Activated CD4-positive, alpha-beta T cell treated with anti-CD3 and anti-CD28 coated beads, Interleukin-2, amount 10 ng/mL, durations not matched to agents 24 days and 14 days (primary cell): ENCODE measurements at regions of chr13 and their contacts with region 1.

Region 1: DNA sequence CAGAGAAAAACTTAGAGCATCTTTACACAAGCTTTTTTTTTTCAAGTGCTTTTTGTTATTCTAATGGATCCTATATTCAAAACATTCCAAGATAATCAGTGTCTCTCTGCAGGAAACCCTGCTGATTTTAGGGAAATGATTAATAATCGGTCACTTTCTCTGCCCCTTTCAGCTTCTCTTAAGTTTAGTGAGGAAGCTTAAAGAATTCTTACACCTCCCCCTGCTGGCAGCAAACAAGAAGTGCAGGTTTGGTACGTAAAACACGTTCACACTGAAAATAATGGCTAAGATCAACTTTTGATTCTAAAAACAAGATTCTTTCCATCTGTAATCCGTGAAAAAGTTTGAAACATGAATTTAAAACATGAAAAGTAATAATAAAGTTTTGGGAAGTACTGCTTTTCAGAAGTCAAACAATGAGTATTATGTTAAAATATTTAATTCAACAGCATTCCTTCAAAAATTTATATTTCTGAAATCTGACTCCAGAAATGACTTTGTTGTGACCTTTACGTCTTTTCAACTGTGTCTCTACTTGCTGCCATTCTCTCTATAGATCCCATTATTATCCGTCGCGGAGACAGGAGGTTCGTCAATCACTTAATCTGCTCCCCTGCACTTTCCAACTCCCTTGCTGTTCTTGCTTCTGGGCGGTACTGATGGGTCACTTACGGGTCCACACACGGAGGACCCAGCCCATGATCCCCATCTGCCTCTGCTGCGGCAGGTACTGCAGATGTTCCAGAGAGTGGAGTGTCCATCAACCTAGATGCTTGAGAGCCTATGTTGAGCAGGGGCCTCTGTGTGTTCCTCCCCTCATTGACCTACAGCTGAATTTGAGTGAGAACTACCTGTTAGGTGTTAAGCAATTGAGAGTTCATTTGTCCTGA is 203.1 kb upstream of the EDNRB start:
- DNase-seq: peak; percentile 76
- H3K4me3 Mint-ChIP-seq: no peak overlapping the region
- H3K27ac Mint-ChIP-seq: no peak overlapping the region
- H3K4me1 Mint-ChIP-seq: no peaks in the 10 kb centered on the region
- H3K27me3 Mint-ChIP-seq: peaks cover 3% of the 10 kb centered on the region

Region 2: DNA sequence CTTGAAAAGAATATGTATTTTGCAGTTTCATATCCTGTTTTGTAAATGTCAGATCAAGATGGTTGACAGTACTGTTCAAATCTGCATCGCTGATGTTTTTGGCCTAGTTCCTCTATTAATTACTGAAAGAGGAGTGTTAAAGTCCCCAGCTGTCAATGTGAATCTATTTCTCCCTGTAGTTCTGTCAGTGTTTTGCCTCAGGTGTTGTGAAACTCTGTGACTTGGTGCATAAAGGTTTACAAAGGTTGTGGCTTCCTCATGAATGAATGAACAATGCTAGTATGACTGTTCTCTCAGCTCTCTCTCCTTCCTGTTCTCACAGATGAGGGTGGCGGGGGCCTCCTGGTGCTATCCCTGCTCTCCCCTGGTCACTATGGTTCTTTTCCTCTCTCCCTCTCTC is 937.2 kb before region 1 on chr13:
- intact Hi-C with region 1: no loop called
- DNase-seq: peak; percentile 70
- H3K4me3 Mint-ChIP-seq: peak overlapping the region; percentile 21
- H3K27ac Mint-ChIP-seq: peak overlapping the region; percentile 76
- H3K4me1 Mint-ChIP-seq: peaks cover 15% of the 10 kb centered on the region
- H3K27me3 Mint-ChIP-seq: no peaks in the 10 kb centered on the region

Region 3: DNA sequence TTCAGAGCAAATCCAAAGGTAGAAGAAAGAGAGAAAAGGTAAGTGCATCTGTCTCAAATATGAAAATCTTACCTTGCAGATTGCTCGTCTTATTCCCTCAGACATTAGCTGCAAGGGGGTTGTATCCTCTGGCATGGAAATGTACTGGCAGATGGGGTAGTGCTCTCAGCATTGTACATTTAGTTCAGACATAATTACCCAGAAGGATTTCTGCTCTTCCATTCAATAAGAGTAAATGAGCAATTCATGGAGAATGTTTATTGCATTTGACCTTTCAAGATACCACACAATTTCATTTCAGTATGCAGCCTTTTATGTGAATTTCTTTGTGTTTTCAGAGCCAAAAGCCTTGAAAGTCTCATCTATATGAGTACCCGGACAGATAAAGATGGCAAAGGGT is 522.4 kb before region 1 on chr13:
- intact Hi-C with region 1: loop called (anchors 10 kb)
- DNase-seq: no peak
- H3K4me3 Mint-ChIP-seq: no peak overlapping the region
- H3K27ac Mint-ChIP-seq: no peak overlapping the region
- H3K4me1 Mint-ChIP-seq: no peaks in the 10 kb centered on the region
- H3K27me3 Mint-ChIP-seq: peaks cover 14% of the 10 kb centered on the region